Ovary (tissue), 10 donors: ENCODE measurements at regions of chr10 and their contacts with region 1.

Region 1: GRCh38 chr10:114304017-114304570 is 65.0 kb downstream of the VWA2 start:
- DNase-seq: peak; percentile 88 to 93 (median 90)
- H3K4me3 ChIP-seq: peak overlapping the region; percentile 17
- H3K27ac ChIP-seq: peak overlapping the region in 1 of 2 donors; percentile 2
- H3K4me1 ChIP-seq: peaks cover 3% of the 10 kb centered on the region
- H3K27me3 ChIP-seq: no peaks in the 10 kb centered on the region
- CTCF ChIP-seq: peak; percentile 81 to 89 (median 85)
- EP300 ChIP-seq: no peak
- POLR2A ChIP-seq: no peak

Region 2: DNA sequence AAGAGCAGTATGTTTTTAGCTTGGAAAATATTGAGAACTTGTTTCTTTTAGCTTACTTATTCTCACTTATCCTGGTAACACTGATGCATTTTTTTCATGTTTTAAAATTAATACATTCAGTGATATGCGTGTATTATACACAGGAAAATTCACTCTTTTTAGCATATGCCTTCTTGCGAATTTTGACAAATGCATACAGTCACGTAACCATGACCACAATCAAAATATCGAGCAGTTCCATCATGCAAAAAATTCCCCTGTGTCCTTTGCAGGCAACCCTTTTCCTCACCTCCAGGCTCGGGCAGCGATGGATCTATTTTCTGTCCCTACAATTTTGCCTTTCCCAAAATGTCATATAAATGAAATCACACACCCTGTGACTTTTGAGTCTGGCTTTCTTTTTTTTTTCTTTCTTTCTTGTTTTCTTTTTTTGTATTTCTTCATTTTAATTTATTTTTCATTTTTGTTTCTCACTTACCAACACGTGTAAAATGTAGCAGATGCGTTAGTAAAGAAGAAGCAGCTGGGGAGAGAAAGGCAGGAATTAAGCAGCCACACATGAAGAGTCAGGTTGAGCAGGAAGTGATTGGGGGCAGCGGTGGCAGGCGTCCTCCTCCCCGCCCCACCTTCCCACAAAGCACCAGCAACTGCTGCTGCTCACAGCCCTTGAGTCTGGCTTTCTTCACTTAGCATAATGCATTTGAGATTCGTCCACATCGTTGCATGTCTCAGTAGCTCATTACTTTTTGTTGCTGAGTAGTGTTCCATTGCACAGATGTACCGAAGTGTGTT is 230.5 kb before region 1 on chr10:
- intact Hi-C with region 1: no loop called
- DNase-seq: no peak
- H3K4me3 ChIP-seq: no peak overlapping the region
- H3K27ac ChIP-seq: no peak overlapping the region
- H3K4me1 ChIP-seq: no peaks in the 10 kb centered on the region
- H3K27me3 ChIP-seq: no peaks in the 10 kb centered on the region
- CTCF ChIP-seq: no peak
- EP300 ChIP-seq: no peak
- POLR2A ChIP-seq: no peak

Region 3: GRCh38 chr10:114403541-114404161 is 99.6 kb after region 1 on chr10:
- intact Hi-C with region 1: loop called in 1 of 4 experiments (anchors 10 kb)
- DNase-seq: peak; percentile 59 to 76 (median 68)
- H3K4me3 ChIP-seq: peak overlapping the region; percentile 57
- H3K27ac ChIP-seq: peak overlapping the region; percentile 52 to 66
- H3K4me1 ChIP-seq: peaks cover 15% of the 10 kb centered on the region
- H3K27me3 ChIP-seq: no peaks in the 10 kb centered on the region
- CTCF ChIP-seq: peak in 2 of 3 donors; percentile 27 to 46
- EP300 ChIP-seq: no peak
- POLR2A ChIP-seq: no peak

Region 4: DNA sequence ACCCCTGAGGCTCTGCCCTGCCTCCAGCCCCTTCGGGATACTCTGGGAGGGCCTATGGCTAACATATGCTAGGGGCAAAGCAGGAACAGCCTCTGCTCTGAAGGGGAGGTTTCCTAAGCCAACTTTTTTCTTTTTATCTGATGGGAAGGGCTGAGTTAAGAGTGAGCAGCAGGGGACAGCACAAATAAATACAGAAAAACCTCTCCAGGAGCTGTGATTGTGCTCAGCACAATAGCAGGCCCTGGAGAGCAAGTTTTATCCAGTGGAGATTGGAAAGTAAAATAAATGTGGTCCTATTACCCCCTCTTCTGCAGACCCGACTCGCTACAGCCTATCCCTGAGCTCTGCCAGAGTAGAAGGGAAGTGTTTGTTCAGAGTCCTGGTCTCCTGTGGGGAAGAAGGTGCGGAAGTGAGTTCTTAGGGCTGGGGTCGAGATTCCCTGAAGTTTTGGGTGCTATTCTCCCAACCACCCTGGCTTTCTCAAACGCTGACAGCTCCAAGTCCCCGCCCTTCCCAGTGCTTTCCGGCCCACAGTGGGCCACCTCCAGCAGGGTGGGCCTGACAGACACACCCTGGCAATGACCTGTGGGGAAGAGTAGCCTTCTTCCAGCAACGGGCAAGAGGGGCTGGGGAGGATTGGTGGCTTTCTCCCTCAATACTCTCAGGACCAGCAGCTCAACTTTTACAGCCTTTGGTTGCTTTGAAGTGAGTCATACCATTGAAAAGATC is 123.2 kb after region 1 on chr10:
- intact Hi-C with region 1: loop called (anchors 5 to 10 kb)
- DNase-seq: no peak
- H3K4me3 ChIP-seq: no peak overlapping the region
- H3K27ac ChIP-seq: no peak overlapping the region
- H3K4me1 ChIP-seq: peaks cover 1% of the 10 kb centered on the region
- H3K27me3 ChIP-seq: no peaks in the 10 kb centered on the region
- CTCF ChIP-seq: peak in 1 of 3 donors; percentile 17
- EP300 ChIP-seq: no peak
- POLR2A ChIP-seq: no peak

Region 5: DNA sequence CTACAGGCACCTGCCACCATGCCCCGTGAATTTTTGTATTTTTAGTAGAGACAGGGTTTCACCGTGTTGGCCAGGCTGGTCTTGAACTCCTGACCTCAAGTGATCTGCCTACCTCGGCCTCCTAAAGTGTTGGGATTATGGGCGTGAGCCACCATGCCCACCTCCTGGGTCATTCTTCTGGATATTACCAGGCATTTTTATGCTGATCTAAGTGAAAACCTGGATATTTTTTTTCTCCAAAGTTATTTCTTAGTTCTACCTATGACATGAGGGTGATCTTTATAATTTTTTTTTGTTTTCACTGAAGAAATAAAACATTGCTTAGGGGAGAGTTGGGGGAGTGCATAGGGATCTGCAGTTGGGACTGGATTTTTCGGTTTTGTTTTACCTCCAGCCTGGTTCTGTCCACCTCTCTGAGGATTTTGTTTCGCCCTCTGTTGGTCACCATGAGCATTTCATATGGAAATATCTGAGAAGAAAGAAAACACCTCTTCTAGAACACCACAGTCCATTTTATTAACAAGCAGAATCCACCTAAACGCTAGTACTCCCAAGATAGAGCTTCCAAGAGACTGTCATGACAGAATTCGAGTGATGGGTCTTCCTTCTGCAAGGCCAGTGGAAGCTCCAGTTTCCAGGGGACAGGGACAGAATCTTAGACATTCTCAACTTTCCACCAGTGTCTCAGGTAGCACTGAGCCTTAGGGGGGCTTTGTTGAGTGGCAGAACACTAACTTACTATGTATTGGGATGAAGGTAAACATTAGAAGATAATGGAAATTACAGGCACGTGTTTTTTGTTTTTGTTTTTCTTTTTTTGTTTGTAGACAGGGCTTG is 133.6 kb after region 1 on chr10:
- intact Hi-C with region 1: loop called in 1 of 4 experiments (anchors 10 kb)
- DNase-seq: no peak
- H3K4me3 ChIP-seq: no peak overlapping the region
- H3K27ac ChIP-seq: no peak overlapping the region
- H3K4me1 ChIP-seq: no peaks in the 10 kb centered on the region
- H3K27me3 ChIP-seq: no peaks in the 10 kb centered on the region
- CTCF ChIP-seq: no peak
- EP300 ChIP-seq: no peak
- POLR2A ChIP-seq: no peak

Region 6: DNA sequence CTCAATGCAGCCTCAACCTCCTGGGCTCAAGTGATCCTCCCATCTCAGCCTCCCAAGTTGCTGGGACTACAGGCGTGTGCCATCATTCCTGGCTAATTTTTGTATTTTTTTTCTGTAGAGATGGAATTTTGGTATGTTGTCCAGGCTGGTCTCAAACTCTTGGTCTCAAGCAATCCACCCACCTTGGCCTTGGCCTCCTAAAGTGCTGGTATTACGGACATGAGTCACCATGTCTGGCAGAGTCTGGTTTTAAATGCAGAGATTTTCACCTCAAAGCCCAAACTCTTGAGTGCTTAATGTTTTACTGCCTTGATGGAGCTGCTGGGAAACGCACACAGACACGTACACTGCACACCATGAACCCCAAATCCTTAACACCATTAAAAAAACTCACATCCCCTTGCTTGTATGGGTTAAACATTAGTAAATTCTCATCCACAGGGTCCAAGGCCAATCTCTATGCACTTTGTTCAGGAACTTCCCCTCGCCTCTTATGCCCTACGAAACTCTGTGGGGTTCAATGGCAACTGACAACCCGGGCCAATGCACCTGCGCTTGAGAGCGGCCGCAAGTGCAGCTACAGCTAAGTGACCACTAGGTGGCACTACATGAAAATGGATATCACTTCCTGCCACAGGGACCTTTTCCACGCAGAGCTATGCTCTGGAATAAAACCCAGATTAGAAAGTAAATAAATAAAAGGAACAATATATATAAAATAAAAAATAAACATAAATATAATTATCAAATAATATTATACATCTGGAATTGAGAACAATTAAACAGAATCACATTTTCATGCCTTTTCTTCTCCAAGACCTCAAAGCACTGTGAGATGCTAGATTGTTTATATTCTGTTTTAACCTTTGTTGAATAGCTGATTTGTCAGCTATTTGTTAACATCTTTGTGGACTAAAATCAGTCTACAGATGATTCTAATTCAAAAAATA is 167.1 kb after region 1 on chr10:
- intact Hi-C with region 1: loop called in 1 of 4 experiments (anchors 5 kb)
- DNase-seq: peak; percentile 58 to 76 (median 72)
- H3K4me3 ChIP-seq: no peak overlapping the region
- H3K27ac ChIP-seq: peak overlapping the region; percentile 15 to 43
- H3K4me1 ChIP-seq: peaks cover 2% of the 10 kb centered on the region
- H3K27me3 ChIP-seq: no peaks in the 10 kb centered on the region
- CTCF ChIP-seq: peak; percentile 68 to 82 (median 79)
- EP300 ChIP-seq: no peak
- POLR2A ChIP-seq: no peak

Region 7: GRCh38 chr10:114541081-114541796 is 237.1 kb after region 1 on chr10:
- intact Hi-C with region 1: loop called (anchors 5 to 10 kb)
- DNase-seq: peak; percentile 76 to 90 (median 78)
- H3K4me3 ChIP-seq: no peak overlapping the region
- H3K27ac ChIP-seq: peak overlapping the region; percentile 59 to 81
- H3K4me1 ChIP-seq: peaks cover 14% of the 10 kb centered on the region
- H3K27me3 ChIP-seq: no peaks in the 10 kb centered on the region
- CTCF ChIP-seq: no peak
- EP300 ChIP-seq: no peak
- POLR2A ChIP-seq: peak; percentile 14